CD8-positive, alpha-beta memory T cell (primary cell): ENCODE measurements at regions of chr14 and their contacts with region 1.

Region 1: GRCh38 chr14:50542941-50543418 is 10.6 kb upstream of the MAP4K5 start:
- DNase-seq: peak in 2 of 5 donors; percentile 26 to 28
- H3K4me3 ChIP-seq: no peak overlapping the region
- H3K4me3 Mint-ChIP-seq: no peak overlapping the region
- H3K27ac ChIP-seq: no peak overlapping the region
- H3K27ac Mint-ChIP-seq: peak overlapping the region in 1 of 8 donors; percentile 41
- H3K4me1 ChIP-seq: peaks cover 8% of the 10 kb centered on the region
- H3K4me1 Mint-ChIP-seq: peaks cover 7 to 16% (median 15%) of the 10 kb centered on the region in 3 donors
- H3K27me3 ChIP-seq: no peaks in the 10 kb centered on the region
- H3K27me3 Mint-ChIP-seq: peaks cover 0 to 11% of the 10 kb centered on the region in 2 donors

Region 2: DNA sequence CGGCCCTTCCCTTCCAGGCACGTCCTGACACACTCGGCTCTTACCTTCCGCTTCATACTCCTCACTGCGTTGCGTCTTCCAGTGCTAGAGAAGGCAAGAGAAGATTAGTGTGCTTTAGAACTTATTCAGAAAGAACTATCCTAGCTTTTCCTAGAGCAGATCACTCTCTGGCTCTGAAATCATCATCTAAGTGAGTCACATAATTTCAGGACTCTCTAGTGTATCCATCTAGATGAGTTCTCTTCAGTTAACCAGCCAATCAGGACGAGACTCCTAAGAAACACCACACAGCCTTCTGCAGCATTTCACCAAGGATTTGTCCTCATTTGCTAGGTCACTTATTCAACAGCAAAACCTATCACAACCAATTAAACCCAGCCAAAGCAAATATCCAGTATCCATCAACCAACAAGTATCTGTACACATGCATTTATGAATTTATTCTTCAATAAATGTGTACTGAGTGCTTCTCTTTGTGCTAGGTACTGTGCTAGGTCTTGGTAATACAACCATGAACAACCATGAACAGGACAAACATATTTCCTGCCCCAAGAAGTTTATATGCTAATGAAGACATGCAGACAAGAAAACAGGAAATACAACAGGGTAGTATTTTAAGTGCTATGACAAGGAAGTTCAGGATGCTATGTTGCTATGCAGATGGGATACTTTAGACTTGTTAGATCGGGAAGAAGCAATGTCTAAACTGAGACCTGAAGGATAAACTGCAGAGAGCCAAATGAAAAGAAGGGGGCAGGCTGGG is 235.9 kb after region 1 on chr14:
- CTCF ChIA-PET with region 1: interaction called, 16 read pairs
- POLR2A ChIA-PET with region 1: no interaction called
- DNase-seq: no peak
- H3K4me3 ChIP-seq: no peak overlapping the region
- H3K4me3 Mint-ChIP-seq: peak overlapping the region in 6 of 7 donors; percentile 2 to 49 (median 33)
- H3K27ac ChIP-seq: no peak overlapping the region
- H3K27ac Mint-ChIP-seq: peak overlapping the region; percentile 27 to 95 (median 82)
- H3K4me1 ChIP-seq: peaks cover 39% of the 10 kb centered on the region
- H3K4me1 Mint-ChIP-seq: peaks cover 54 to 84% (median 68%) of the 10 kb centered on the region in 3 donors
- H3K27me3 ChIP-seq: no peaks in the 10 kb centered on the region
- H3K27me3 Mint-ChIP-seq: no peaks in the 10 kb centered on the region